Activated naive CD4-positive, alpha-beta T cell treated with anti-CD3 and anti-CD28 coated beads, Interleukin-2, amount 10 ng/mL, durations not matched to agents 7 days and 5 days (primary cell): ENCODE measurements at regions of chr3 and their contacts with region 1.

Region 1: DNA sequence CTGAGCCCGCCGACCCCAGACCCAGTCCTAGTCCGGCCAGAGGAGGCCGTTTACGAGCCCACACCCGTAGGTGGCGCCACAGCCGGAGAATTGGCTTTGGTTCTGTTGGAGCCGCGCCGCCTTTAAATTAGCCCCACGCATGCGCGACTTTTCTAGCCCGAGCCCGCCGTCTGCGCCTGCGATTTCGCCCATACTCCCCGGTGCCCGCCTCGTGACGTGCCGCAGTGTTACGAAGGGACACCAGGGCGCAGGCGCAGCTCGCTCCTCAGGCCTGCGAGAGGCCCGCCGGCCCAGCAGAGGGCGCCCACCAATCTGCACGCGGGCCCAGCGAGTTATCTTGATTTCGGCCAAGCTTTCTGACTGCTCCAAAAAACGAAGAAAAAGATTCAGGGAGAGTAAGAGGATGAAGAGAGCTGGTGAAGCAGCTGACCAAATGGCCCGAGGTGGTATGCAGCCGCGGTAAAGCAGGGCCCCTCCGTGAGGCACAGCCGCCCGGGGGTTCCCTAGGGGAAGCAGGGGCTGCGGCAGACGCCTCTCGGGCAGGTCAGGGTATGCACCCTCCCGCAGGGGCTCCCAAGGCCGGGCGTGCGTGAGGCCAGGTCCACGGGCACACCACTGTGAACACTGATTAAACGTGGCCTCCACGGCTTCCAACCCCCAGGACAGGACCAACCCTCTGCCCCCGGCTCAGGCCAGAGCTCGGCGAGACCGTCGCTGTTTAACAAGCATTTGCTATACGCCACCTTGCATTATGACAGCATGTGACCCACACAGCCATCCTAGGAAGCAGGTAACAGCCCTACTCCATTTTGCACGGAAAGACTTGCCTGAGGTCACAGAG is 32.8 kb downstream of the RPN1 start:
- DNase-seq: peak; percentile 99
- H3K4me3 Mint-ChIP-seq: peak overlapping the region; percentile 94
- H3K27ac Mint-ChIP-seq: peak overlapping the region; percentile 90
- H3K4me1 Mint-ChIP-seq: peaks cover 42% of the 10 kb centered on the region
- H3K27me3 Mint-ChIP-seq: no peaks in the 10 kb centered on the region

Region 2: DNA sequence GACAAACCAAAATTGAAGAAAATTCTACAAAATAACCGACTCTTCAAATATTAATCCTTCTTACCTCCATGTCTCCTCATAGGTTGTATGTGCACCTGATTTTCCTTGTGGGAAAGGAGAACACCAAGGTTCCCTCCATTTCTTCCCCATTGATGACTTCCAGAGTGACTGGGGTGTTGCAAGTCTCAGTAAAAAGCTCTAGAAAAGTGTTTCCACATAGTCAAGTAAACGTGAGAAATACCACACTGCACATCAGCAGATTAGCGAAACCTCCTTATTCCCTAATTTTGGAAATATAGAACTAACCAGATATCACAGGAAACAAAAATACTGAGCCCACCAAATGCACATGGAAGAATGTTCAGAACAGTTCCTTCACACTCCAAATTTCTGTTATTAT is 37.8 kb after region 1 on chr3:
- CTCF ChIA-PET with region 1: interaction called, 15 read pairs
- DNase-seq: no peak
- H3K4me3 Mint-ChIP-seq: no peak overlapping the region
- H3K27ac Mint-ChIP-seq: no peak overlapping the region
- H3K4me1 Mint-ChIP-seq: peaks cover 18% of the 10 kb centered on the region
- H3K27me3 Mint-ChIP-seq: peaks cover 13% of the 10 kb centered on the region

Region 3: GRCh38 chr3:128794770-128795649 is 177.2 kb after region 1 on chr3:
- CTCF ChIA-PET with region 1: interaction called, 31 read pairs
- DNase-seq: peak; percentile 77
- H3K4me3 Mint-ChIP-seq: peak overlapping the region; percentile 3
- H3K27ac Mint-ChIP-seq: peak overlapping the region; percentile 82
- H3K4me1 Mint-ChIP-seq: peaks cover 78% of the 10 kb centered on the region
- H3K27me3 Mint-ChIP-seq: no peaks in the 10 kb centered on the region

Region 4: GRCh38 chr3:128845778-128846485 is 228.2 kb after region 1 on chr3:
- CTCF ChIA-PET with region 1: interaction called, 14 read pairs
- DNase-seq: peak; percentile 88
- H3K4me3 Mint-ChIP-seq: peak overlapping the region; percentile 62
- H3K27ac Mint-ChIP-seq: peak overlapping the region; percentile 38
- H3K4me1 Mint-ChIP-seq: peaks cover 14% of the 10 kb centered on the region
- H3K27me3 Mint-ChIP-seq: peaks cover 8% of the 10 kb centered on the region

Region 5: GRCh38 chr3:128942161-128942876 is 324.5 kb after region 1 on chr3:
- CTCF ChIA-PET with region 1: no interaction called
- DNase-seq: no peak
- H3K4me3 Mint-ChIP-seq: no peak overlapping the region
- H3K27ac Mint-ChIP-seq: no peak overlapping the region
- H3K4me1 Mint-ChIP-seq: no peaks in the 10 kb centered on the region
- H3K27me3 Mint-ChIP-seq: peaks cover 37% of the 10 kb centered on the region